H1 (cell line): ENCODE measurements at regions of chr16 and their contacts with region 1.

Region 1: DNA sequence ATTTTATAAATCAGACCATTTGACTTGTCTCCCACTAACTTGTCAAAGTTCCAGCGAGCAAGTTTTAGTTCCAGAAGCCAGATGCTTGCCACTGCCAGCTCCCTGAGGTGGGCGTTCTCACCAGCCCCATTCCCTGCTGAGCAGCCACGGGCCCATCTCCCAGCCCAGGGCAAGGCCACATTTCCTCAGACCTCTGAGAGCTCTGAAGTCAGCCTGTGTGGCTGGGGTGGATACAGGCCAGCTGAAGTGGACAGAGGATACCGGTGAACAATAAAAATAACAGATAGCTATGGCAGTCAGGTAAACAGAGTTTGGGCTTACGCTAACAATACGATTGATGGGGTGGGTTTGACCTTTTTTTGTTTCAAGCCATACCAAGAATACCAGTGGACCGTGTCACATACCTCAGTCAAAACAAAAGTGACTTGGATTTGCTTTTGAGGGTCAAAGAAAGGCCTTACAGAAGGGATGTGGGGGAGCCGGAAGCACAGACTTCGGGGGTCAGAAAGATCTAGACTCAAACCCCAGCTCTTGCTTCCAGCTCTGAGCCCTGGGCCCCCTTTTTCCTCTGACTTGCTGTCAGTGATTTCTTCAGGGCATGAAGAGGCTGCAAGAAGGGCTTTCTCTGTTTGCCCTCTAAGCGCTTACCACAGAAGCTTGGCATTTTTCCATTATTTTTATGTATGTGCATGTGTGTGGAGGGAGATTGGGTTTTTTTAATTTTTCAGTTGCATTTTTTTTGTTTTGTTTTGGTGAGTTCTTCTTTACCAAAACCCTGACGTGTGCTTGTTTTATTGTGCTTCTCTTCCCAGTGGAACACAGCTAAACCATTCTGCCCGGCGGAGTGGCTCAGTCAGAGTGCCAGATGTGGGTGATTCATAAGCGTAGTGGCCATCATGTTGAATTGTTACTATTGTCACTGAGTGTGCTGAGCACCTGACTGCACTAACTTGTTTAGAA is 109.9 kb downstream of the GNAO1 start:
- DNase-seq: no peak
- H3K4me3 ChIP-seq: no peak overlapping the region
- H3K27ac ChIP-seq: no peak overlapping the region
- H3K4me1 ChIP-seq: peaks cover 8 to 11% (median 10%) of the 10 kb centered on the region in 4 experiments; a peak in 6 of 7 replicates
- H3K27me3 ChIP-seq: peaks cover 0 to 2% (median 0%) of the 10 kb centered on the region in 4 experiments; a peak in 1 of 7 replicates
- CTCF ChIP-seq: no peak
- EP300 ChIP-seq: no peak
- POLR2A ChIP-seq: no peak
- RAD21 ChIP-seq: no peak

Region 2: DNA sequence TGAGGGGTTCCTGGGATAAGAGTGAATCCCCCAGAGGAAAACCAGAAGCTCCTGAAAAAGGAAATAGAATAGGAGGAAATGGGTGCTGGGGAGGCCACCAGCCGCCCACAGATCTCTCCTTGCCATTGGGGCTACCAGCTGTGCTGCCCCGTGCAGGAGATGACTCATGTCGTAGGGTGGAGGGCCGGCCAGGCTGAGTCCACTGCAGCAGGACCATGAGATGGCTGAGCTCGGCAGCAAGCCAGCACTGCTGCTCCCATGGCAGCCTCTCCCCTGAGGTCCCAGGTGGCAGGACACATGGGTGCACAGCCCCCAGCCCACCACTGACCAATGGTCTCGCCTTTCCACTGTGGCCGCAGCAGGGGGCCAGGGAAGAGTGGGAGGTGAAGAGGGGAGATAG is 14.4 kb before region 1 on chr16:
- CTCF ChIA-PET with region 1: interaction called, 10 read pairs
- POLR2A ChIA-PET with region 1: interaction called, 7 read pairs
- DNase-seq: no peak
- H3K4me3 ChIP-seq: no peak overlapping the region
- H3K27ac ChIP-seq: no peak overlapping the region
- H3K4me1 ChIP-seq: peaks cover 0 to 27% (median 17%) of the 10 kb centered on the region in 4 experiments; a peak in 6 of 7 replicates
- H3K27me3 ChIP-seq: no peaks in the 10 kb centered on the region
- CTCF ChIP-seq: no peak
- EP300 ChIP-seq: no peak
- POLR2A ChIP-seq: no peak
- RAD21 ChIP-seq: no peak

Region 3: GRCh38 chr16:56370877-56371659 is 69.9 kb after region 1 on chr16:
- CTCF ChIA-PET with region 1: no interaction called
- POLR2A ChIA-PET with region 1: no interaction called
- DNase-seq: no peak
- H3K4me3 ChIP-seq: no peak overlapping the region
- H3K27ac ChIP-seq: no peak overlapping the region
- H3K4me1 ChIP-seq: no peaks in the 10 kb centered on the region
- H3K27me3 ChIP-seq: no peaks in the 10 kb centered on the region
- CTCF ChIP-seq: no peak
- EP300 ChIP-seq: no peak
- POLR2A ChIP-seq: no peak
- RAD21 ChIP-seq: no peak